ENCODE measurements at regions of chr1 and their contacts with region 1.

Region 1: GRCh38 chr1:203172128-203173010 is 3.3 kb downstream of the MYBPH start:
- DNase-seq: peak; percentile 68 to 92
- H3K4me3 ChIP-seq: no peak overlapping the region
- H3K27ac ChIP-seq: no peak overlapping the region
- H3K4me1 ChIP-seq: peaks cover 0 to 7% (median under 1%) of the 10 kb centered on the region in 4 experiments; a peak in 3 of 7 replicates
- H3K27me3 ChIP-seq: no peaks in the 10 kb centered on the region
- CTCF ChIP-seq: peak; percentile 97 to 99 (median 97)
- EP300 ChIP-seq: no peak
- POLR2A ChIP-seq: no peak
- RAD21 ChIP-seq: peak; percentile 82 to 90

Region 2: GRCh38 chr1:202576816-202577215 is 595.6 kb before region 1 on chr1:
- CTCF ChIA-PET with region 1: no interaction called
- POLR2A ChIA-PET with region 1: no interaction called
- DNase-seq: no peak
- H3K4me3 ChIP-seq: no peak overlapping the region
- H3K27ac ChIP-seq: no peak overlapping the region
- H3K4me1 ChIP-seq: peaks cover 0 to 27% (median 19%) of the 10 kb centered on the region in 4 experiments; a peak in 6 of 7 replicates
- H3K27me3 ChIP-seq: no peaks in the 10 kb centered on the region
- CTCF ChIP-seq: no peak
- EP300 ChIP-seq: no peak
- POLR2A ChIP-seq: no peak
- RAD21 ChIP-seq: no peak

Region 3: GRCh38 chr1:203057911-203058675 is 114.3 kb before region 1 on chr1:
- CTCF ChIA-PET with region 1: interaction called, 25 read pairs
- POLR2A ChIA-PET with region 1: no interaction called
- DNase-seq: no peak
- H3K4me3 ChIP-seq: no peak overlapping the region
- H3K27ac ChIP-seq: no peak overlapping the region
- H3K4me1 ChIP-seq: peaks cover 10 to 23% (median 17%) of the 10 kb centered on the region in 4 experiments
- H3K27me3 ChIP-seq: no peaks in the 10 kb centered on the region
- CTCF ChIP-seq: no peak
- EP300 ChIP-seq: no peak
- POLR2A ChIP-seq: no peak
- RAD21 ChIP-seq: no peak

Region 4: GRCh38 chr1:203148125-203148524 is 24.2 kb before region 1 on chr1:
- CTCF ChIA-PET with region 1: interaction called, 140 read pairs
- POLR2A ChIA-PET with region 1: no interaction called
- DNase-seq: no peak
- H3K4me3 ChIP-seq: no peak overlapping the region
- H3K27ac ChIP-seq: no peak overlapping the region
- H3K4me1 ChIP-seq: peaks cover 7 to 43% (median 19%) of the 10 kb centered on the region in 4 experiments
- H3K27me3 ChIP-seq: no peaks in the 10 kb centered on the region
- CTCF ChIP-seq: peak; percentile 35 to 63 (median 52); a peak in 3 of 4 replicates
- EP300 ChIP-seq: no peak
- POLR2A ChIP-seq: no peak
- RAD21 ChIP-seq: no peak; a peak in 1 of 4 replicates

Region 5: GRCh38 chr1:203186446-203187303 is 14.3 kb after region 1 on chr1 and contains the start of gene CHI3L1:
- CTCF ChIA-PET with region 1: interaction called, 64 read pairs
- POLR2A ChIA-PET with region 1: no interaction called
- DNase-seq: no peak
- H3K4me3 ChIP-seq: no peak within 1 kb of the TSS
- H3K27ac ChIP-seq: no peak within 1 kb of the TSS
- H3K4me1 ChIP-seq: peaks cover 6 to 17% (median 11%) of the 10 kb centered on the region in 4 experiments
- H3K27me3 ChIP-seq: no peaks in the 10 kb centered on the region
- CTCF ChIP-seq: no peak
- EP300 ChIP-seq: no peak
- POLR2A ChIP-seq: no peak
- RAD21 ChIP-seq: no peak
- total RNA-seq, gene CHI3L1: not detected in 2 replicates

Region 6: GRCh38 chr1:203202431-203203245 is 30.3 kb after region 1 on chr1:
- CTCF ChIA-PET with region 1: interaction called, 28 read pairs
- POLR2A ChIA-PET with region 1: no interaction called
- DNase-seq: no peak
- H3K4me3 ChIP-seq: no peak overlapping the region
- H3K27ac ChIP-seq: no peak overlapping the region
- H3K4me1 ChIP-seq: peaks cover 0 to 7% (median 0%) of the 10 kb centered on the region in 4 experiments; a peak in 2 of 7 replicates
- H3K27me3 ChIP-seq: no peaks in the 10 kb centered on the region; a peak in 1 of 7 replicates
- CTCF ChIP-seq: no peak
- EP300 ChIP-seq: no peak
- POLR2A ChIP-seq: no peak
- RAD21 ChIP-seq: no peak